Activated CD4-positive, alpha-beta memory T cell treated with anti-CD3 and anti-CD28 coated beads for 36 hours (primary cell): ENCODE measurements at regions of chr10 and their contacts with region 1.

Region 1: DNA sequence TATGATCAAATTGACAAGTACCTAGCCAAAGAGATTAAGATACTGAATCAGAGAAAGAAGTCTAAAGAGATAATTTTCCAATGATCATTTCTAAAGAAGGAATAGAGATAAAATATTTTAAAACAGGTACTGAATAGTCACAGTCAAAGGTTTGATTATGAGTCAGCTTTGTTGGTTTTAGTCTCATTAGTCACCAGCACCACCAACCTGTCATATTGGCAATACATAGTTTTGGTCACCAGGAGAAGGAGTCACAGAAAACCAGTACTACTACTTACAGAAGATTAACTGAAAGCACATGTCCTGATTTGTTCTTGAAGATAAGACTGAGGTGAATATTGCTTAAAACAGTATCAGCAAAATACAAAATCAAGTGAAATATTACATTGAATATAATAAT is 34.6 kb downstream of the ZEB1 start:
- DNase-seq: peak; percentile 21
- H3K4me3 Mint-ChIP-seq: no peak overlapping the region
- H3K27ac Mint-ChIP-seq: no peak overlapping the region
- H3K4me1 Mint-ChIP-seq: peaks cover 52% of the 10 kb centered on the region
- H3K27me3 Mint-ChIP-seq: no peaks in the 10 kb centered on the region

Region 2: GRCh38 chr10:31340343-31340742 is 13.2 kb before region 1 on chr10:
- CTCF ChIA-PET with region 1: interaction called, 6 read pairs
- POLR2A ChIA-PET with region 1: interaction called, 3 read pairs
- intact Hi-C with region 1: loop called (anchors 1 kb)
- DNase-seq: peak; percentile 38
- H3K4me3 Mint-ChIP-seq: no peak overlapping the region
- H3K27ac Mint-ChIP-seq: no peak overlapping the region
- H3K4me1 Mint-ChIP-seq: peaks cover 24% of the 10 kb centered on the region
- H3K27me3 Mint-ChIP-seq: no peaks in the 10 kb centered on the region

Region 3: DNA sequence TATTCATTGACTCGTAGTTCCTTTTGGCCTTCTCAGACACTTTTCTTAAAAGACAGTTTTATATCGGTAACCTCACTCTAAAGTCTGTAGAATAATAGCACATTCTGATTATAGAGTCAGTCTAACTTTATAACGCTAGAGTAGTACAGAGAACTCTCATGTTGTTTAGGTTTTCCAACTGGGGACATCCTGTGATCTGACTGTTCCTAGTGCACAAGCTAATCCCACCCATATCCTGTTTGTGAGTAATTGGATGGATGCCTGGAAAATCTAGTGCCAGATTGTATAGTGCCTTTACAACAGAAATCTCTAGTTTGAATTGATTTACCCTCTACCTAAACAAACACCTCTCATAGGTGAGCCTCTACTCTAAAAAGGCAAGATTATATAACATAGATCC is 72.8 kb after region 1 on chr10:
- CTCF ChIA-PET with region 1: no interaction called
- POLR2A ChIA-PET with region 1: no interaction called
- intact Hi-C with region 1: loop called (anchors 1 kb)
- DNase-seq: no peak
- H3K4me3 Mint-ChIP-seq: no peak overlapping the region
- H3K27ac Mint-ChIP-seq: no peak overlapping the region
- H3K4me1 Mint-ChIP-seq: peaks cover 52% of the 10 kb centered on the region
- H3K27me3 Mint-ChIP-seq: no peaks in the 10 kb centered on the region